Esophagus muscularis mucosa (tissue), 4 donors: ENCODE measurements at regions of chr14 and their contacts with region 1.

Region 1: DNA sequence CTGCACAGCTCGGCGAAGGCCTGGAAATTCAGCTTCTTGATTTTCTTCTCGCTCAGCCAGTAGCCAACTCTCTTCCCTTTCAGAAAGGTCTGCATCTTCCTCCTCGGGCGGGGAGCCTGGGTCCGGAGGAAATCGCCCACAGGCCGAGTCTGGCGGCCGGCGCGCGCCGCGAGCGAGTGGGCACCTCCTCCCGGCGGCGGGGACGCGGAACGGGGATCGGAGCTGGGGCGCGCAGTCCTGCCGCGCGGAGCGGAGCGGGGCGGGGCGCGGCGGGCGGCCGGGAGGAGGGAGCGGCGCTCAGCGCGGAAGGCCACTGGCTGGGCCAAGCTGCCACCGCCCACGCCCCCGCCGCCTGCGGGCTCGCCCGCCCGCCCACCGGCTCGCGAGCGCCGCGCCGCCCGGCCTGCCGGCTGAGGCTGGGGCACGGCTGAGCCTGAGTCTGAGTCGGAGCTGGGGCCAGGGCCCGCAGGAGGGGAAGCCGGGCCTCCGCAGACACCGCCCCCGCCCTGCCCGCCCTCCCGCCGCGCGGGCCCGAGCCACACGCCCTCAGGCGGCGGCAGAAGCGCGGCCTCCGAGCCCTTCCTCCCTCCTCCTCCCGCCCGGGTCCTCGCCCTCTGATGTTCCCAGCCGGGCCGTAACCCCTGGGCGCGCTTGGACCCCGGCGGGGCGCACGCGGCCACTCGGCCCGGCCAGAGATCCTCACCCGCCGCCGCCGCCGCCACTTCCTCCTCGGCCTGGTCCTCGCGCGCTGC is 480 bp downstream of the ITPK1 start:
- DNase-seq: no peak
- H3K4me3 ChIP-seq: peak overlapping the region; percentile 70 to 98 (median 84)
- H3K27ac ChIP-seq: peak overlapping the region; percentile 97 to 99 (median 99)
- H3K4me1 ChIP-seq: peaks cover 26 to 56% (median 53%) of the 10 kb centered on the region in 4 donors
- H3K27me3 ChIP-seq: no peaks in the 10 kb centered on the region
- CTCF ChIP-seq: peak in 1 of 3 experiments; percentile 1
- EP300 ChIP-seq: no peak
- POLR2A ChIP-seq: peak; percentile 6

Region 2: DNA sequence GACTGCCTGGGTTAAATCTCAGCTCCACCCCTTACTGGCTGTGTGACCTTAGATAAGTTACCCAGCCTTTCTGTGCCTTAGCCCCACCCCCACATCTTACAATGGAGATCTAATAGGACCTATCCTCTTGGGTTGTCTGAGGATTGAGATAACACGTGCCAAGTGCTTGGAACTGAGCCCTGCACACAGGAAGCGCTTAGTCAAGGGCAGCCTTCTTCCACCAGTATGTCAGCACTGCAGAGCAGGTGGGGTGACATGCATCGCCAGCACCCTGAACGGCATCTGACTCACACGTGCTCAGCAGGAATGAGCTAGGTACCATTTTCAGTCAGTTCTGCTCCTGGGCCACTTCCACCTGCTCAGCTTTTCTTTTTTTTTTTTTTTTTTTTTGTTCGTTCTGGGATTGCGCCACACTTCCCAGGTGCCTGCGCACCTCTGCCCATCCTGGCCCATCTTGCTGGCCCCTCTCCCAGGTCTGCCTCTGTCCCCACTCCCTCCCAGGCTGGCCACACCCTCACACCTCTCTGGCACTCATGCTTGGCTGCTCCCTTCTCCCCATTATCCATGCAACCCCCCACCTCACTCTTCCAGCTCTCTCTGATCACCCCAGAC is 386.4 kb before region 1 on chr14:
- intact Hi-C with region 1: no loop called
- DNase-seq: no peak
- H3K4me3 ChIP-seq: no peak overlapping the region
- H3K27ac ChIP-seq: no peak overlapping the region
- H3K4me1 ChIP-seq: peaks cover 3 to 21% (median 7%) of the 10 kb centered on the region in 4 donors
- H3K27me3 ChIP-seq: no peaks in the 10 kb centered on the region
- CTCF ChIP-seq: no peak
- EP300 ChIP-seq: no peak
- POLR2A ChIP-seq: no peak

Region 3: GRCh38 chr14:92951912-92952471 is 163.3 kb before region 1 on chr14:
- intact Hi-C with region 1: loop called (anchors 5 kb)
- DNase-seq: peak; percentile 95
- H3K4me3 ChIP-seq: no peak overlapping the region
- H3K27ac ChIP-seq: peak overlapping the region; percentile 37 to 53 (median 44)
- H3K4me1 ChIP-seq: peaks cover 37 to 43% (median 41%) of the 10 kb centered on the region in 4 donors
- H3K27me3 ChIP-seq: no peaks in the 10 kb centered on the region
- CTCF ChIP-seq: peak; percentile 94 to 98 (median 97)
- EP300 ChIP-seq: no peak
- POLR2A ChIP-seq: no peak

Region 4: DNA sequence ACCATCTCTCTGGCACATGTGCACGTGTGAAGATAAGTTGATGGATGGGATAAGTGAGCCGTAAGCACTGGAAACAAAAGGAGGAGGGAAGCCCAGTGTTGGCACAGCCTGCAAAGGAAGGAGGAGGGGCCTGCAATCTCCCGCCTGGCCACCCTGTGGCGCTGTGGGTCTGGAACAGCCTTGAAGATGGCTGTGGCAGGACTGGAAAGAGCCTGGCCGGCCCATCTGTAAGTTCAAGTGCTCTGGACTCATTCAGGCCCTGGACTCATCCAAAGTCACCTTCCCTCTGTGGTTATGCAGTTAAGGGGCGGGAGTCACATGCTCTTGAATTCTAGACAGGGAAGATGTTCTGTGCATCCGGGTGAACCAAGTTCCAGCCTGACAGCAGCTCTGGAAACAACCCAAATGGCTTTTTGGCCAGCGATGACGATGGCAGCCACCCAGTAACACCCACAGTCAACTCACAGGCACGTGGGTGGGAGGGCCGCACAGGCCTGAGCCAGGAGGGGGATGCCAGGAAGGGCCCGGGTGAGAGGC is 141.9 kb before region 1 on chr14:
- intact Hi-C with region 1: loop called (anchors 2 kb)
- DNase-seq: peak; percentile 94
- H3K4me3 ChIP-seq: no peak overlapping the region
- H3K27ac ChIP-seq: peak overlapping the region; percentile 79 to 89 (median 88)
- H3K4me1 ChIP-seq: peaks cover 25 to 56% (median 40%) of the 10 kb centered on the region in 4 donors
- H3K27me3 ChIP-seq: no peaks in the 10 kb centered on the region
- CTCF ChIP-seq: peak; percentile 90 to 93 (median 92)
- EP300 ChIP-seq: peak; percentile 54
- POLR2A ChIP-seq: no peak

Region 5: DNA sequence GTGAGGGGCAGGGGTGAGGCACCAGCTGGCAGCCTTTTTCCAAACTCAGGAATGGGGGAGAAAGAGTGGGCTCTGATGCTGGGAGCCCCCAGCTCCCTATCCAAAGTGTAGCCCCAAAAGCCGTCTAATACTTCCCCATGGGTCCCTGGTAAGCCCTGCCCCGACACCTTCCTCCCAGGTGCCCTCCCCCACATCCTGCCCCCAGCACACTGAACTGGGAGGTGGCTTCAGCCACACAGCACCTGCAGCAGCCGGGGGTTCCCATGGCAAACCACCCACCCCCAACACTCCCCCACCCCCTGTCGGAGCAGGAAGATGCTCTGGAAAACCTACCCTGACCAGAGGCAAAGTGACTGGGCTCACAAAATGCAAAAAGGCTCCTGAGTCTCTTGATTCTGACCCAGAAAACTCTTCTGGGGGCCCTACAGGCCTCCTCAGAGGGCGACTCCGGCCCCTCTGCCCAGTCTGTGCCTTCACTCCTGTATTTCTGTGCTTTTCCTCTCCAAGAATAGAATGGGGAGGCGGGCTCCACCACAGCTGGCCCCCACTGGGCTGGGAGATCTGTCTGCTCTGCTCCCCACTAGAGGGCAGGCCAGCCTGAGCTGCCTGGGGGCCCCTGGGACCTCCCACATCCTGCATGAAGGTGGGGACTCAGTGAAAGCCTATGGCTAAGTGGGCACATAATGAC is 81.1 kb before region 1 on chr14:
- intact Hi-C with region 1: loop called (anchors 10 kb)
- DNase-seq: no peak
- H3K4me3 ChIP-seq: no peak overlapping the region
- H3K27ac ChIP-seq: peak overlapping the region; percentile 86 to 93 (median 86)
- H3K4me1 ChIP-seq: peaks cover 78 to 100% (median 99%) of the 10 kb centered on the region in 4 donors
- H3K27me3 ChIP-seq: no peaks in the 10 kb centered on the region
- CTCF ChIP-seq: peak; percentile 43 to 53 (median 49)
- EP300 ChIP-seq: no peak
- POLR2A ChIP-seq: no peak

Region 6: GRCh38 chr14:93073910-93074769 is 41.1 kb before region 1 on chr14:
- intact Hi-C with region 1: loop called (anchors 5 kb)
- DNase-seq: no peak
- H3K4me3 ChIP-seq: no peak overlapping the region
- H3K27ac ChIP-seq: peak overlapping the region; percentile 61 to 77 (median 70)
- H3K4me1 ChIP-seq: peaks cover 39 to 96% (median 90%) of the 10 kb centered on the region in 4 donors
- H3K27me3 ChIP-seq: no peaks in the 10 kb centered on the region
- CTCF ChIP-seq: no peak
- EP300 ChIP-seq: no peak
- POLR2A ChIP-seq: no peak

Region 7: DNA sequence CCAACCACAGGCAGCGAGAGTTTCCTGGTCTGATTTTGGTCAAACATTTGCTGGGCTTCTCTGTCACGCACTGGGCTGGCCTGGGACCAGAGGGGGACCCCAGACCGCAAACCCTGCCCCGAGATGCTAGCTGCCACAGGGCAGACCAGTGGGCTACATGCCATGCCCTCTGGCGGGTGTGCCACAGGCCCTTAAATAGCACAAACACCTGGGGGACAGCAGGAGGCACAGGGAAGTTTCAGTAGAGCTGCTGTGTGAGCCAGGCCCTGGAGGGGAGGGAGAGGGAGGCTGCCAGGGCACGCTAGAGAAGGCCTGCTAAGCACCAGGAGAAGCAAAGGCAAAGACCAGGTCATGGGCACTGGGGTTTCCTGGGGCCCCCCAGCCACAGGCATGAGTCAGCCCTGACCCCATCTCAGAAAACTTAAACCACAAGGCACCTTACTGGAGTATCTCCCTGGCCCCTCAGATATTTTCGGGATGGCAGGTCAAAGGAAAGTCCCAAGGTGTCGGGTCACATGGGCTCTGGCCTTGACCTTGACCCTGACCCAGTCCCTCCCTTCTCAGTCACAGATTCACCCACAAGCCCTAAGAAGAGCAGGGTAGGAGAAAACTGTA is 28.7 kb before region 1 on chr14:
- intact Hi-C with region 1: no loop called
- DNase-seq: no peak
- H3K4me3 ChIP-seq: no peak overlapping the region
- H3K27ac ChIP-seq: peak overlapping the region; percentile 54 to 74 (median 61)
- H3K4me1 ChIP-seq: peaks cover 74 to 96% (median 86%) of the 10 kb centered on the region in 4 donors
- H3K27me3 ChIP-seq: no peaks in the 10 kb centered on the region
- CTCF ChIP-seq: no peak
- EP300 ChIP-seq: no peak
- POLR2A ChIP-seq: no peak

Region 8: GRCh38 chr14:93137864-93138263 is 22.6 kb after region 1 on chr14:
- intact Hi-C with region 1: loop called (anchors 1 kb)
- DNase-seq: no peak
- H3K4me3 ChIP-seq: no peak overlapping the region
- H3K27ac ChIP-seq: no peak overlapping the region
- H3K4me1 ChIP-seq: peaks cover 6 to 31% (median 10%) of the 10 kb centered on the region in 4 donors
- H3K27me3 ChIP-seq: no peaks in the 10 kb centered on the region
- CTCF ChIP-seq: peak in 2 of 3 experiments; percentile 27 to 40
- EP300 ChIP-seq: no peak
- POLR2A ChIP-seq: no peak